Activated CD8-positive, alpha-beta T cell treated with anti-CD3 and anti-CD28 coated beads for 36 hours (primary cell): ENCODE measurements at regions of chr9 and their contacts with region 1.

Region 1: DNA sequence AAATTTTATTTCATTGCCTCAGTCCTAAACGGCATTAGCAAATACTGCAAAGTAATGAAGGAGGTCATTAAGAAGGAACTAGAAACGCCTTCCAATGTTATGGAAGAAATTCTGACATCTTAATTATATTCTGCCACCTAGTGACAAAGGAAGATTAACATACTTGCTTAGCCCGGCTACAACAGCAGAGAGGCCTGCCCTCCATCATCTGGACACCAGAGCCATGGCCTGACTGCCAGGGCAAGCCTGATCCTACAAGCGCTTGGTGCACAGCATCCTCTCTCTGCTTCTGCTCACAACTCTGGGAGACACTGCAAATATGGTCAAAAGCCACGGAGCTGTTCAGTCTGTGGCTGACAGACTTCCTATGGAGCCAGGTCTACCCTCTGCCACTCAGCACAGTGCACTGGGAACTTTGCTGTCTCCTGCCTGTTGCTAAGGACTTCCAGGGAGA is 87.3 kb upstream of the SLC44A1 start:
- DNase-seq: peak; percentile 13
- ATAC-seq: peak; percentile 76
- H3K4me3 Mint-ChIP-seq: no peak overlapping the region
- H3K27ac Mint-ChIP-seq: no peak overlapping the region
- H3K4me1 Mint-ChIP-seq: peaks cover 7% of the 10 kb centered on the region
- H3K27me3 Mint-ChIP-seq: no peaks in the 10 kb centered on the region
- CTCF ChIP-seq: peak; percentile 50

Region 2: GRCh38 chr9:104863180-104863883 is 293.8 kb before region 1 on chr9:
- CTCF ChIA-PET with region 1: interaction called, 33 read pairs
- POLR2A ChIA-PET with region 1: no interaction called
- intact Hi-C with region 1: loop called (anchors 1 kb)
- DNase-seq: peak; percentile 65
- ATAC-seq: peak; percentile 81
- H3K4me3 Mint-ChIP-seq: no peak overlapping the region
- H3K27ac Mint-ChIP-seq: no peak overlapping the region
- H3K4me1 Mint-ChIP-seq: no peaks in the 10 kb centered on the region
- H3K27me3 Mint-ChIP-seq: no peaks in the 10 kb centered on the region
- CTCF ChIP-seq: peak; percentile 68

Region 3: DNA sequence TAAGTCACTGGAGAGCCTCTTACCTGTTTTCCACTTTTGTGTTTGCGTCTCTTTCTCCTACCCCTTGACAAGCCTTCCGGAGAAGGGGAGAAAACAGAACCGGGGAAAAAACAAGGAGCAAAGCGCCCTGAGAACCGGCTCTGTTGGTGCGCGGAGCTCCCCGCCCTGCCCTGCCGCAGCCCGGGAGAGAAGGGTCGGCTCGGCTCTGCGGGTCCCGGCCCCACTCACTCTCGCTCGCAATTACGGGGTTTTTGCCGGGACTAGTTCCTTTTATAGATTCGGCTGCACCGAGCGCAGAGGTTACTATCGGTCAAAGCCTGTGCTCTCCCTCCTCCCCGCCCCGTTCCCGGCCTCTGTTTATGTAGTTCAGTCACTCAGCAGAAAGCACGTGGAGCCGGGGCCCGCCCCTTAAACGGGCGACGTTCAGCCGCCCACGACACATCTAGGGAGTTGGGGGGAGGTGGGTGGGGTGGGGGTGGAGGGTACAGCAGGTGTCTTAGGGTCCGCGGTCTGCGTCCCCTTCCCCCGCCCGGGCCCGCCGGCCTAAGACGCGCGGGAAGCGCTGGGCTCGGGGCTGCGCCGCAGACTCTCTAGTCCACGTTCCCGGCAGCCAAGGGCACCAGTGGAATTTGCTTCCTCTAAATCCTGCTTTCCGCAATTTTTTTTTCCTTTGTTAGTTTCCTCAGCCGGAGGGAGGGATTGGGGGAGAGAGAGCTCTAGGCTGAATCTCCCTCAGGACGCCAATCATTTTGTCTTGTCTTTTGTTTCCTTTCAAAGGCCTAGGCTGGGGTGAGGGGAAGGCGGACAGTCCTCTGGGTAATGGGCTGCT is 229.0 kb before region 1 on chr9 and contains the start of gene ABCA1:
- CTCF ChIA-PET with region 1: interaction called, 5 read pairs
- POLR2A ChIA-PET with region 1: no interaction called
- intact Hi-C with region 1: loop called (anchors 1 kb)
- DNase-seq: peak; percentile 88
- ATAC-seq: peak; percentile 76
- H3K4me3 Mint-ChIP-seq: peak within 1 kb of the TSS; percentile 73
- H3K27ac Mint-ChIP-seq: no peak within 1 kb of the TSS
- H3K4me1 Mint-ChIP-seq: peaks cover 12% of the 10 kb centered on the region
- H3K27me3 Mint-ChIP-seq: peaks cover 15% of the 10 kb centered on the region
- CTCF ChIP-seq: no peak
- total RNA-seq, gene ABCA1: 0.20 to 0.38 TPM

Region 4: DNA sequence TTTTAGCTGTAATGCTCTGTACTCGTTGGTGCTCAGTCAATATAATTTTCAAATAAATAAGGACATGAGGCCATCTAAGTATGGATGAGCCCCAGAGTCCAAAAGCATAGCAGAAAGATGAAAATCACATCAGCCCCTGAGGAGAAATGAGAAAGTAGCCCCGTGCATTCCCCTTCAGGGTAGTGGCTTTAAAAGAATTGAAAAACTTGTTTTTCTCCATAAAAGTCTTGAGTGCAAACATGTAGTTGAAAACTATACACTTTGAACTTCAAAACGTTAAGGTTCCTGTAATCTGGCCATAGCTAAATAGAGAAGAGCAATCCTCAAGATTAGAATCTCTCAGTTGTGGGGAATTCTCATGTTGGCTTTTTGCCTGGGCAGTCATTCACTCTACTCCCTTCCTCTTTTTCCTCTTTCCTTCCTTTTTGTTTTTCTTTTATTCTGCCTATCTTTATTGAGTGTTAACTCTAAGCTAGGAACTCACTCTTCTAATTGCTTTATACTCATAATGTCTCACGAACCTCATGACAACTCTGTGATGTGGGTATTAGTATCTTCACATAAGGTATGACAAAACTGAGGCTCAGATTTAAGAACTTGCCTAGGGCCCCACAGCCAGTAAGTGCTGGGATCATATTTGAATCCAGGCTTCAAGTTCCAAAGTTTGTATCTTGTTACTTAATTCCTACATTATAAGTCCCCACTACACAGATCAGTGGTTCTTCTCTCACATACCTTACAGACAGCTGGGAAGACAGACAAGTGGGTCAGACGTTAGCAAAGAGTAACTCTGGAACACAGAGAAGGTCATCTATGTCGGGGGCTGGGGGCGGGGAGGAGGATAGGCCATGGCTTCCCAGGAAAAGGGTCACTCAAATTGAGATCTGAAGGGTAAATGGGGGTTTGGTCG is 182.8 kb before region 1 on chr9:
- CTCF ChIA-PET with region 1: no interaction called
- POLR2A ChIA-PET with region 1: no interaction called
- intact Hi-C with region 1: no loop called
- DNase-seq: no peak
- ATAC-seq: no peak
- H3K4me3 Mint-ChIP-seq: no peak overlapping the region
- H3K27ac Mint-ChIP-seq: no peak overlapping the region
- H3K4me1 Mint-ChIP-seq: no peaks in the 10 kb centered on the region
- H3K27me3 Mint-ChIP-seq: peaks cover 13% of the 10 kb centered on the region
- CTCF ChIP-seq: no peak

Region 5: DNA sequence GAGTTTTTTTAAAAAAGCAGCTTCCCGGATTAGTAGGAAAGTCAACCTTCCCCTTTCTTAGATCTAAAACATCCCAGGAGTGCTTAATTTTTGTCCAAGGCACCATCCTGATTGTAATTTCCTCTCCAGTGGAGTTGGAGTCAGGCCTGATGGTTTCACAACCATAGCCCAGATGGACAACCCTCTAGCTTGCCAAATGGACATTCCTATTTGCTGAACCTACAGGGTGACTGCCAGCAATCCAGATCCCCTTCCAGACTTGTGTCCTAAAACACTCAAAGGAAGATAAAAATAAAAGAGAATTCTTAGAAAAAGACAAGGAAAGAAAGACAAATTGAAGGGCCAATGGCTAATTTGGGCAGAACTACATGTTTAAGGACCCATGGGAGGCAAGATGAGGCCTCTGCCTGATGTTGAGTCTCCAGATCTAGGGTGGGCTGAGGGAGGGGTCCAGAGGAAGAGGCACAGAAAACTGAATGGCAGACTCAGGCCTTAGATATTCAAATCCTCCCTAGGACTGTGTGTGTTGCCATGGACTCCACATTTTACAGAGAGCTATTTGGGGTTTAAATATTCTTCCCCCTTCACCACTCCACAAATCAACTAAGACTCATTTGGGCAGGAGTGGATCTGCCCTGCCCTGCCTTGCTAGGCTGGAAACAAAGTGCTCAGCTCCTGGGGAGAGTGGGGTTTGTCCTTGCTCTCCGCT is 48.8 kb after region 1 on chr9:
- CTCF ChIA-PET with region 1: no interaction called
- POLR2A ChIA-PET with region 1: no interaction called
- intact Hi-C with region 1: no loop called
- DNase-seq: no peak
- ATAC-seq: no peak
- H3K4me3 Mint-ChIP-seq: no peak overlapping the region
- H3K27ac Mint-ChIP-seq: no peak overlapping the region
- H3K4me1 Mint-ChIP-seq: no peaks in the 10 kb centered on the region
- H3K27me3 Mint-ChIP-seq: no peaks in the 10 kb centered on the region
- CTCF ChIP-seq: no peak

Region 6: GRCh38 chr9:105414947-105415661 is 257.9 kb after region 1 on chr9:
- CTCF ChIA-PET with region 1: interaction called, 18 read pairs
- POLR2A ChIA-PET with region 1: no interaction called
- intact Hi-C with region 1: loop called (anchors 2 kb)
- DNase-seq: peak; percentile 73
- ATAC-seq: peak; percentile 91
- H3K4me3 Mint-ChIP-seq: no peak overlapping the region
- H3K27ac Mint-ChIP-seq: no peak overlapping the region
- H3K4me1 Mint-ChIP-seq: peaks cover 3% of the 10 kb centered on the region
- H3K27me3 Mint-ChIP-seq: peaks cover 28% of the 10 kb centered on the region
- CTCF ChIP-seq: peak; percentile 86